Stomach (tissue), 19 donors: ENCODE measurements at regions of chr15 and their contacts with region 1.

Region 1: GRCh38 chr15:67433495-67434099 is 87.3 kb upstream of the C15orf61 start:
- DNase-seq: peak; percentile 64 to 71
- H3K4me3 ChIP-seq: no peak overlapping the region
- H3K27ac ChIP-seq: no peak overlapping the region
- H3K4me1 ChIP-seq: peaks cover 0 to 6% (median 0%) of the 10 kb centered on the region in 4 donors
- H3K27me3 ChIP-seq: no peaks in the 10 kb centered on the region
- CTCF ChIP-seq: peak in 5 of 7 experiments; percentile 45 to 80 (median 68)
- EP300 ChIP-seq: no peak
- POLR2A ChIP-seq: no peak

Region 2: GRCh38 chr15:66940368-66940767 is 493.2 kb before region 1 on chr15:
- intact Hi-C with region 1: loop called (anchors 5 kb)
- DNase-seq: no peak
- H3K4me3 ChIP-seq: no peak overlapping the region
- H3K27ac ChIP-seq: no peak overlapping the region
- H3K4me1 ChIP-seq: peaks cover 0 to 32% (median 12%) of the 10 kb centered on the region in 4 donors
- H3K27me3 ChIP-seq: no peaks in the 10 kb centered on the region
- CTCF ChIP-seq: no peak
- EP300 ChIP-seq: no peak
- POLR2A ChIP-seq: no peak